ENCODE measurements at regions of chr2 and their contacts with region 1.

Region 1: GRCh38 chr2:139160836-139161235 is 380.6 kb upstream of the NXPH2 start:
- DNase-seq: peak; percentile 79
- H3K4me3 ChIP-seq: no peak overlapping the region
- H3K27ac ChIP-seq: no peak overlapping the region
- H3K4me1 ChIP-seq: peaks cover 10% of the 10 kb centered on the region
- H3K27me3 ChIP-seq: no peaks in the 10 kb centered on the region
- CTCF ChIP-seq: no peak

Region 2: GRCh38 chr2:138985881-138986280 is 175.0 kb before region 1 on chr2:
- CTCF ChIA-PET with region 1: no interaction called
- POLR2A ChIA-PET with region 1: interaction called, 20 read pairs
- intact Hi-C with region 1: no loop called
- DNase-seq: no peak
- H3K4me3 ChIP-seq: no peak overlapping the region
- H3K27ac ChIP-seq: no peak overlapping the region
- H3K4me1 ChIP-seq: no peaks in the 10 kb centered on the region
- H3K27me3 ChIP-seq: no peaks in the 10 kb centered on the region
- CTCF ChIP-seq: no peak

Region 3: GRCh38 chr2:139217641-139218040 is 56.8 kb after region 1 on chr2:
- CTCF ChIA-PET with region 1: no interaction called
- POLR2A ChIA-PET with region 1: no interaction called
- intact Hi-C with region 1: no loop called
- DNase-seq: peak; percentile 66
- H3K4me3 ChIP-seq: no peak overlapping the region
- H3K27ac ChIP-seq: no peak overlapping the region
- H3K4me1 ChIP-seq: no peaks in the 10 kb centered on the region
- H3K27me3 ChIP-seq: no peaks in the 10 kb centered on the region
- CTCF ChIP-seq: no peak

Measured in A673 (cell line).